Heart left ventricle (tissue), 16 donors: ENCODE measurements at regions of chr5 and their contacts with region 1.

Region 1: DNA sequence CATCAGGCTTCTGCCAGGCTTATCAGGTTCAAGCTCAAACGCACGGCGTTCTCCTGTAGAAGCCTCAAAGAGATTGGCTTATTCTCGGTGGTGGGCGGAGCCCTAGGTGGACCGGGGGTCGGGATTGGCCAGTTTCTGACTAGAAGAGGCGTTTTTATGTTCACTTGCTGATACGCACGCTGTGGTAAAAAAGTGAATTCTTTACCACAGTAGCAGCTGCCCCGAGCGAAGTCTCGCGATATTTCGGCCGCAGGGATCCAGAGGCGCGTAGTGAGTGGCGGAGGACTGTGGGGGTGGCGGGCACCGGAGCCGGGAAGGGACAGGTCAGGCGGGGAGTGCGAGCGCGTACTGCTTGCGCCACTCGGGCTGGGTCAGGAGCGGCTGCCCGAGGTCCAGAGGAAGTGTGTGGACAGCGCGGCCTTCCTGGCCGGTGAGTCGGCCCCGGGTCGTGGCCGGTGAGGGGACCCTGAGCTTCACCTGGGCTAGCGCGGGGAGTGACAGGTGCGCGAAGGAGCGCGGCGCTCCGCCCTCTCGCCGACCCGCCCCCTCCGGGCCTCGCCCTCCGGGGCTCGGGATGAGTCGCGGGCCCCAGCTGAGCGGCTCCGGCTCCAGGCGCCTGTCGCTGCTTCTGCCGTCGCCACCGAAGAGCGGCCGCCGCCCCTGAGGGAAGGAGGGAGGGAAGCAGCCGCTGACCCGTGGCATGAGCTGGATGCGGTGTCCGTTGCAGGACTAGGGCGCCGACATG is at the start of gene DMXL1:
- DNase-seq: peak; percentile 99 to 100 (median 100)
- ATAC-seq: peak; percentile 97 to 98 (median 98)
- H3K4me3 ChIP-seq: peak within 1 kb of the TSS; percentile 71 to 100 (median 92)
- H3K27ac ChIP-seq: peak within 1 kb of the TSS; percentile 89 to 99 (median 96)
- H3K4me1 ChIP-seq: peaks cover 0 to 44% (median 25%) of the 10 kb centered on the region in 12 donors
- H3K27me3 ChIP-seq: peaks cover 0 to 3% (median 0%) of the 10 kb centered on the region in 9 donors
- CTCF ChIP-seq: no peak
- POLR2A ChIP-seq: peak in 1 of 2 donors; percentile 69
- total RNA-seq, gene DMXL1: 22.4 to 39.0 (median 27.7) TPM

Region 2: GRCh38 chr5:119336845-119337580 is 266.0 kb after region 1 on chr5:
- intact Hi-C with region 1: loop called in 1 of 10 experiments (anchors 5 kb)
- DNase-seq: no peak
- ATAC-seq: no peak
- H3K4me3 ChIP-seq: no peak overlapping the region
- H3K27ac ChIP-seq: peak overlapping the region in 9 of 12 donors; percentile 2 to 73 (median 39)
- H3K4me1 ChIP-seq: peaks cover 0 to 85% (median 11%) of the 10 kb centered on the region in 12 donors
- H3K27me3 ChIP-seq: no peaks in the 10 kb centered on the region
- CTCF ChIP-seq: no peak
- POLR2A ChIP-seq: no peak